ENCODE measurements at regions of chr10 and their contacts with region 1.

Region 1: DNA sequence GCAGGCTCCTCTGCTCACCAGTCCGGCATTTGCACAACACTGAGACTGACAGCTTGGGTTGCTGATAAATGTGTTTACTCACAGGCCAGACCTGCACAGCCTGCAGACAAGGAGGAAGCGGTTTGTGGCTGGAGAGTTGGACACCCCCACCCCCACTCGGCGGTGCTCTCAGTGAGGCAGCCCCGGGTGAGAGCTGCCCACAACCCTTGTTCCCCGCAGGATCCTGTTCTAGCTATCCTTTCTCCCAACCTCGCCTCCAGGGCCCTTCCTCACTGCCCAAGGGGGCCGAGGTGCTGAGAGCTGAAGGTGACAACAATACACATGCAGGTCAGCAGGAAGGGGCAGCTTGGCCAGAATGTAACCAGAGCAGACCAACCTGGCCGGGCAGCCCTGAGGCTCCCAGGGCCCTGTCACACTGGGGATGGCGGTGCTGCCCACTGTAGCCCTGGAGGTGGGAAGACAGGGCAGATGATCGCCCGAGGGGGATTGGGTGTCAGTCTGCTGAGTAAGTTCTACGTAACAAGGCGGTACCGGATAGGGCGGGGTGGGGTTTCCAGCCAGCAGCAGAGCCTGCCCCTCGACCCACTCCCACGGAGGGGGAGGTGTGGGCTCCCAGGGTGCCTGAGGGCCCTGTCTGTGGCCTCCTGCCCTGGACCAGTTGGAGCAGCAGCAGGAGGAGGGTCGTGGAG is 2.1 kb upstream of the ADAM8 start:
- DNase-seq: peak; percentile 80 to 86
- H3K4me3 ChIP-seq: no peak overlapping the region
- H3K4me3 Mint-ChIP-seq: peak overlapping the region; percentile 33
- H3K27ac Mint-ChIP-seq: peak overlapping the region; percentile 74
- H3K4me1 ChIP-seq: peaks cover 53% of the 10 kb centered on the region
- H3K4me1 Mint-ChIP-seq: peaks cover 11% of the 10 kb centered on the region
- H3K27me3 ChIP-seq: no peaks in the 10 kb centered on the region
- H3K27me3 Mint-ChIP-seq: no peaks in the 10 kb centered on the region
- CTCF ChIP-seq: no peak

Region 2: DNA sequence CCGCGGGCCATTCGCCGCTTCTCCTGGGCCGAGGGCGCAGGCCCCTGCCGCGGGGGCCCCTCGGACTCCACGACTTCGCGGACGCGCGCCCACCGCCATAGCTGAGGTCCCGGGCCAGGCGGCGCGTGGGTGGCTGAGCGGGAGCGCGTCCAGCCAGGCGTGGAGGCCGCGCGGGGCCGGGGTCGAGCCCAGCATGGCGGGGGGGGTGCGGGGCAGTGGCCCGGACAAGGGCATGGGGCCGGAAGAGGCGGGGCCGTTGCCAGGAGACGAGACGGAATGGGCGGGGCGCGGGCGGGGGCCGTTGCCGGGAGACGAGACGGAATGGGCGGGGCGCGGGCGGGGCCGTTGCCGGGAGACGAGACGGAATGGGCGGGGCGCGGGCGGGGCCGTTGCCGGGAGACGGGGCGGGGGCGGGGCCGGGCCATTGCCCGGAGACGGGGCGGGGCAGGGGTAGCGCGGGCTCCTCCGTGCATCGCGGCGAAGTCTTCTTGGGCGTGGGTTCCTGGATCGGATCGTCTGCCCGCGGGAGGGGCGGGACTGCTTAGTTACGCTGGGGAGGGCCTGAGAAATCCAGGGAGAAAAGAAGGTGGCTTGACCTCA is 16.9 kb before region 1 on chr10:
- CTCF ChIA-PET with region 1: interaction called, 7 read pairs
- POLR2A ChIA-PET with region 1: no interaction called
- intact Hi-C with region 1: loop called (anchors 2 kb)
- DNase-seq: peak; percentile 90 to 91
- H3K4me3 ChIP-seq: peak overlapping the region; percentile 47
- H3K4me3 Mint-ChIP-seq: peak overlapping the region; percentile 64
- H3K27ac Mint-ChIP-seq: no peak overlapping the region
- H3K4me1 ChIP-seq: peaks cover 28% of the 10 kb centered on the region
- H3K4me1 Mint-ChIP-seq: peaks cover 18% of the 10 kb centered on the region
- H3K27me3 ChIP-seq: no peaks in the 10 kb centered on the region
- H3K27me3 Mint-ChIP-seq: no peaks in the 10 kb centered on the region
- CTCF ChIP-seq: no peak